ENCODE measurements at regions of chr7 and their contacts with region 1.

Region 1: DNA sequence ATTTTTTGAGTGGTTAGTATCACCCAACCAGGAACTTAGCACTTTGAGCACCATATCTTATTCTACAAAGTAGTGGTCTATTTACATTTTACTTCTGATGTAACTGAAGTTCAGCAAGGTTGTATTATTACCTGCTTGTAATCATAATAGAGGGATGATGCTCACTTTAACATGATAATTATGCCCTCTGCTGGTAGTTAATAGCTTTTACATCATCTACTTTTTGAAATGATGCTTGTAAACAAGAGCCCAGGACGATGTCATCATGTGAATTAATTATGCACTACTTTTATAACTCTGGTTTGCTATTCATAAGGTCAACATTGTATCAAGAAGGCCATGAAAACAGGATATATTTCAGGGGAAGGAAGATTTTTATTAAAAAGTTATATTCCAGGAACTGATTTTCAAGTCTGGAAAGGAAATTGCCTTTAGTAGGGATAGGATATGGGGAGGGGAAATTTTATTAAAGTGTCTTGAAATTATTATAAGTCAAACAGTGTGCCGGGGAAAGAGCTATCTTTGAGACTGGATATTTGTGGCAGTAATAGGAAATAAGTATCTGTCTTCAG is 80.3 kb upstream of the SCIN start:
- DNase-seq: no peak
- ATAC-seq: no peak

Region 2: GRCh38 chr7:11427686-11428273 is 1062.4 kb before region 1 on chr7:
- intact Hi-C with region 1: loop called in 1 of 2 experiments (anchors 5 kb)
- DNase-seq: no peak
- ATAC-seq: peak in 1 of 2 donors; percentile 61

Region 3: DNA sequence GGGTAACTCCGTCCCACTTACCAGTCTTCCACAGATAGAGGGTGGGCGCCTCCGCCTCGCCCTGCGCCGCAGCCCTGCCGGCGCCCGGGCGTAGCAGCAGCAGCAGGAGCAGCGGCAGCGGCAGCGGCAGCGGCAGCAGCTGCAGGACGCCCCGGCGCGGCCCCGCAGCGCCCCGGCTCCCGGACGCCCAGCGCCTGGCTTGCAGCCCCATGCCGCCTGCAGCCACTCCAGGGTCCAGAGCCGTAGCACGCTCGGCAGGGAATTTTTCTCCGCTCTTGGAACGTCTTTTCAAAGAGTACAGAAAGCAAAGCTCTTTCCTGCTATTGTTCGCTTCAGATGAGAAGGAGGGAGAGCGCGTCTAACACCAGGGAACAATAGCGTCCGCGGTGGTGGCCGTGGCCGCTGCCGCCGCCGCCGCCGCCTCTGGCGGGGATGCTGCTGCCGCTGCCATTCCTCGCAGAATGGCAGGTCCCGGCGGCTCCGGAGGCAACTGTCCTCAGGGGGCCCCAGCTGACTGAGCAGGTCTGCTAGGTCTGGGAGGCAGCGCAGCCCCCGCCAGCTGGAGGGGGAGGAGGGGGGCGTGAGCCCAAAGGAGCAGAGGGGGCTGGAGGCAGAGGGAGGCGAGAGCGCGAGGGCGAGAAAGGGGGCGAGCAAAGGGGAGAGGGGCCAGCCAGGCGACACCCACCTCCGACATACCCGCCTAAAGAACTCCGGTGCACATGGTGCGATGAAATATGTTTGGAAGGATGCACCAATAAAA is 658.3 kb before region 1 on chr7 and contains the start of gene THSD7A:
- intact Hi-C with region 1: loop called in 1 of 2 experiments (anchors 10 kb)
- DNase-seq: peak; percentile 57
- ATAC-seq: peak; percentile 90 to 96
- total RNA-seq, gene THSD7A: 2.0 to 2.4 TPM

Region 4: GRCh38 chr7:12067141-12067831 is 422.9 kb before region 1 on chr7:
- intact Hi-C with region 1: loop called in 1 of 2 experiments (anchors 2 kb)
- DNase-seq: peak; percentile 31
- ATAC-seq: peak; percentile 65 to 72

Region 5: DNA sequence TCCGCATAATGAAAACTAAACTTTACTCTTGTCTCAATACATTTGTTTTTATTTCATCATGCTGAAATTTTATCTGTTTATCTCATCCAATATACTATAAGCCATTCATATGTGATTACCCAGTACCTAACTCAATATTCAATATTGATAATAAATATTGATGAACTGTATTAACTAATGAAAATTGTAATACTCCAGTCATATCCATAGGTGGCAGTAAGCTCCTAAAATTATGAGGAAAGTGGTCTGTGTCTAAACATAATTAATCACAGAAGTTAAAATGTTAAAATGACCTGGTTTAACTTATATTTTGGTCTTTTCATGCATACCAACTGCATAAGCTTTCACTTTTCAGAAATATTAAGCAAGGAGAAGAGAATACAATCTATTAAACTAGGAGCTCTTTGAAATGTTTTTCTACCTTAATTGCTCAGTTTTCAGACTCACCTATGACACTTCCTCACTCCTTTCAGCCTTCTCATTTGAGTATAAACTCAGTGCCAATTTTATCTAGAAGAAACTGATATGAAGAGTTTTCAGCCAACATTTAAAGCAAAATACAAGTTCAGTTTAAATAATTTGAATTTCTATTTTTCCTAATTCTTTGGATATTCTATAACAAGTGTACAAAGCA is 56.1 kb before region 1 on chr7:
- intact Hi-C with region 1: loop called in 1 of 2 experiments (anchors 5 kb)
- DNase-seq: no peak
- ATAC-seq: no peak

Region 6: GRCh38 chr7:12458520-12459131 is 31.6 kb before region 1 on chr7:
- intact Hi-C with region 1: loop called in 1 of 2 experiments (anchors 5 kb)
- DNase-seq: no peak
- ATAC-seq: peak; percentile 65 to 73

Measured in left cardiac atrium (tissue), 4 donors.